Activated B cell treated with CpG ODN at 0.5 μM for 24 hours (primary cell): ENCODE measurements at regions of chr10 and their contacts with region 1.

Region 1: DNA sequence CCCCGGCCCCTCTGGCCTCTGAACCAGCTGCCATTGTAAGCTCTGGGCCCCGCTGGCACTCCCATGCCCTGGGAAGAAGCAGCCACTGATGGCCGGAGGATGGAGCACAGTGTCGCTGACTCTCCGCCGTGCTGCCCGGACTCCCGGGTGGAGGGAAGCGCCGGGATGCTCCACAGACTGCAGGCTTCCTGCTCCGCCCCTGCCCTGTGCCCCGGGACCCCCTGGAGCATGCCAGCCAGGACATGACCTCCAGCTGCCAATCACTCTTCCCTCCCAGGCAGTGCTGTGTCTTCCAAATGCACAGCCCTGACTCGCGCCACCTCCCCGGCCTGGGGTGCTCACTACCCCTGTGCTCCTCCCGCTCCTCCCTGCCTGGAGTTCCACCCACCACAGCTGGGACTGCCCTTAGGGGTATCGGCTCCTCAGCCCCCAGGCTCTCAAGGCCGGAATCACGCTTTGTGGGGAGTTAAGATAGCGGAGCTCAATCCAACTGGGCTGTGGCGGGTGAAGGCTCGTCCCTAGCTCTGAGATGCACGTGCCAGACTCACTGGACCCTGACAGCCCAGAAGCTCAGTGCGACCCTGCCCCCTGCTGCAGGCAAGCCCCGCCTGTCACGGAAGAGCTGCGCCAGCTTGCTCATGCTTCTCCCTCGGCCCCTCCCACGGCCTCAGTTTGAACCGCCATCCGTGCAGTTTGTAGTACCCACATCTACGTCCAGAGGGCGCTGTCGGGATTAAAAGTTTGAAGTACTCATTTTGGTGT is 142.3 kb upstream of the TCERG1L start:
- DNase-seq: no peak
- ATAC-seq: no peak
- H3K4me3 Mint-ChIP-seq: no peak overlapping the region
- H3K27ac Mint-ChIP-seq: no peak overlapping the region
- H3K4me1 Mint-ChIP-seq: no peaks in the 10 kb centered on the region
- H3K27me3 Mint-ChIP-seq: peaks cover 16% of the 10 kb centered on the region
- CTCF ChIP-seq: no peak

Region 2: DNA sequence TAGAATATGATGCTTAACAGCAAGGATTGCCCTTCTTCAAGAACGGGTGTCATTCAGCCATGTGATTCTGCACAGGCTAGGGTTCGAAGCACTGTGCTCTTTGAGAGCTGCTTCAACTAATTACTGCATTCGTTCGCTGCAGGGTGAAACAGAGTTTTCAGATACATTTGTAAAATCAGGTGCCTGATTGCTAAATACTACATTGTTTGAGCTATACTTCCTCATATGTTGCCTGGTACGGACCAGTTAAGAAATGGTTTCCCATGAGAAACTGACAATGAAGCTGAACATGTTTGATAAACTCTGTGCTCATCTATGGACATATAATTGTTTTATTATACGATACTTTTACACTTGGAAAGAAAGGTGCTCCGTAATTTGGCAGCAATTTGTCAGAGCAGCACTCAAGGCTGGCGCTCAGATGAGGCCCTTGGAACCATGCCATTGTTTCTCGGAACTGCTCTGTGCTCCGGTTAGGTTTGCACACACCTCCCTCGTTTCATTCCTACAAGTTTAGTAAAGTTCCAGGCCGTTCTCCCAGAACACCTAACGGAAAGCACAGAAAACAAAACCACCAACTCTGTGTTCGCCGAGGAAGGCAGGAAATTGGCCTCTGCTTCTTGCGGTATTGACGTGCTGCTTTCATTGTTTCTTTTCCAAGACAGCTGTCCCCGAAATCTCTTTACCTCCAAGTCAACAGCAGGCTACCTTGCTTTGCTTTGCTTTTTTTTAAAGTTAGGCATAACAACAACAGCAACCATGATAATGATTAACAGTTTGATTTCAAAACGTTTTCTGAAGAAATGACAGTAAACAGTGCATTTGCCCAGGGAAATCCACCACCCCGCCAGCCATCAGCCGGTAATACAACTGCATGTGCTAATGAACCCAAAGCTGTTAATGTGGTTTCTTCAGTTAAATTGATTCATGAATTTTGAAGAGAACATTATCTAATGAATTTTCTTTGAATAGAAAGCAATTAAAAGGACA is 1696.6 kb before region 1 on chr10:
- CTCF ChIA-PET with region 1: no interaction called
- POLR2A ChIA-PET with region 1: interaction called, 12 read pairs
- intact Hi-C with region 1: no loop called
- DNase-seq: no peak
- ATAC-seq: no peak
- H3K4me3 Mint-ChIP-seq: peak overlapping the region; percentile 24
- H3K27ac Mint-ChIP-seq: no peak overlapping the region
- H3K4me1 Mint-ChIP-seq: peaks cover 8% of the 10 kb centered on the region
- H3K27me3 Mint-ChIP-seq: no peaks in the 10 kb centered on the region
- CTCF ChIP-seq: no peak

Region 3: GRCh38 chr10:131177431-131178327 is 276.1 kb before region 1 on chr10:
- CTCF ChIA-PET with region 1: no interaction called
- POLR2A ChIA-PET with region 1: no interaction called
- intact Hi-C with region 1: no loop called
- DNase-seq: no peak
- ATAC-seq: no peak
- H3K4me3 Mint-ChIP-seq: no peak overlapping the region
- H3K27ac Mint-ChIP-seq: no peak overlapping the region
- H3K4me1 Mint-ChIP-seq: no peaks in the 10 kb centered on the region
- H3K27me3 Mint-ChIP-seq: no peaks in the 10 kb centered on the region
- CTCF ChIP-seq: no peak

Region 4: DNA sequence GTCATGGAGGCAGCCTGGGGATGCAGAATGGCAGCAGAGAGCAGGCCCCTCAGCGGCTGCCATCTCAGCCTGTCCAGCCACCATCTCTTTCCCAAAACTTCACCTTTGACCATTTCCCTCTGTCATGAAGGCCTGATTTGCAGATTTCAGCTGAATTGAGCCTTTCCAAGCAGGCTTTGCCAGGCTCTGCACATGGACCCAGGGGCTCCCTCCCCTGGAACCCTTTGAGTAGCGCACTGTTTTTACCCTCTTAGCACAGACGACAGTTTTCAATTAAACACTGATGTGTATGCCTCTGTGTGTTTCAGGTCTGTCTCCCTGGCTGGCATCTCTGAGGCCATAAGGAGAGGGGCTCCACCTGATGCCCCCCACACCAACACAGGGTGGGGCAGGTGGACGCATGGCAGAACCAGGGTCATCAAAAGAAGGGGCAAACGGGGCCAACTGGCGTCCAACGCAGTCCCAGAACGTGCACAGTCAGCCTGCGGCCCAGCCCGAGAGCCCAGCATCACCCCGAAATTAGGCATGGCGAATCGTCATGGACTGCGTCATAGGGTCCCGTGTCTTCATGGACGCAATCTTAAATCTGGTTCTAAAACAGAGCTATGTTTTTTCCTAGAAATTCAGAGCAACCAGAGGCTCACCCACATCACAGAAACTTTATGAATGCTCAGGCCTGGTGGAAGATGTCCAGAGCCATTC is 42.7 kb after region 1 on chr10:
- CTCF ChIA-PET with region 1: no interaction called
- POLR2A ChIA-PET with region 1: no interaction called
- intact Hi-C with region 1: no loop called
- DNase-seq: no peak
- ATAC-seq: no peak
- H3K4me3 Mint-ChIP-seq: no peak overlapping the region
- H3K27ac Mint-ChIP-seq: no peak overlapping the region
- H3K4me1 Mint-ChIP-seq: no peaks in the 10 kb centered on the region
- H3K27me3 Mint-ChIP-seq: no peaks in the 10 kb centered on the region
- CTCF ChIP-seq: no peak

Region 5: GRCh38 chr10:132506711-132507408 is 1053.1 kb after region 1 on chr10:
- CTCF ChIA-PET with region 1: no interaction called
- POLR2A ChIA-PET with region 1: no interaction called
- intact Hi-C with region 1: no loop called
- DNase-seq: peak; percentile 7
- ATAC-seq: no peak
- H3K4me3 Mint-ChIP-seq: no peak overlapping the region
- H3K27ac Mint-ChIP-seq: no peak overlapping the region
- H3K4me1 Mint-ChIP-seq: no peaks in the 10 kb centered on the region
- H3K27me3 Mint-ChIP-seq: no peaks in the 10 kb centered on the region
- CTCF ChIP-seq: no peak